Activated naive CD4-positive, alpha-beta T cell treated with anti-CD3 and anti-CD28 coated beads for 36 hours (primary cell): ENCODE measurements at regions of chr20 and their contacts with region 1.

Region 1: GRCh38 chr20:44521484-44522481 is at the start of gene SERINC3:
- DNase-seq: peak; percentile 99
- H3K4me3 Mint-ChIP-seq: peak within 1 kb of the TSS; percentile 82
- H3K27ac Mint-ChIP-seq: peak within 1 kb of the TSS; percentile 94
- H3K4me1 Mint-ChIP-seq: peaks cover 47% of the 10 kb centered on the region
- H3K27me3 Mint-ChIP-seq: no peaks in the 10 kb centered on the region
- total RNA-seq, gene SERINC3: 48.7 to 50.2 TPM

Region 2: GRCh38 chr20:44210422-44211176 is 311.2 kb before region 1 on chr20 and contains the start of gene OSER1:
- CTCF ChIA-PET with region 1: no interaction called
- intact Hi-C with region 1: loop called (anchors 1 kb)
- DNase-seq: peak; percentile 99
- H3K4me3 Mint-ChIP-seq: peak within 1 kb of the TSS; percentile 94
- H3K27ac Mint-ChIP-seq: peak within 1 kb of the TSS; percentile 92
- H3K4me1 Mint-ChIP-seq: peaks cover 61% of the 10 kb centered on the region
- H3K27me3 Mint-ChIP-seq: no peaks in the 10 kb centered on the region
- total RNA-seq, gene OSER1: 27.7 to 28.4 TPM

Region 3: DNA sequence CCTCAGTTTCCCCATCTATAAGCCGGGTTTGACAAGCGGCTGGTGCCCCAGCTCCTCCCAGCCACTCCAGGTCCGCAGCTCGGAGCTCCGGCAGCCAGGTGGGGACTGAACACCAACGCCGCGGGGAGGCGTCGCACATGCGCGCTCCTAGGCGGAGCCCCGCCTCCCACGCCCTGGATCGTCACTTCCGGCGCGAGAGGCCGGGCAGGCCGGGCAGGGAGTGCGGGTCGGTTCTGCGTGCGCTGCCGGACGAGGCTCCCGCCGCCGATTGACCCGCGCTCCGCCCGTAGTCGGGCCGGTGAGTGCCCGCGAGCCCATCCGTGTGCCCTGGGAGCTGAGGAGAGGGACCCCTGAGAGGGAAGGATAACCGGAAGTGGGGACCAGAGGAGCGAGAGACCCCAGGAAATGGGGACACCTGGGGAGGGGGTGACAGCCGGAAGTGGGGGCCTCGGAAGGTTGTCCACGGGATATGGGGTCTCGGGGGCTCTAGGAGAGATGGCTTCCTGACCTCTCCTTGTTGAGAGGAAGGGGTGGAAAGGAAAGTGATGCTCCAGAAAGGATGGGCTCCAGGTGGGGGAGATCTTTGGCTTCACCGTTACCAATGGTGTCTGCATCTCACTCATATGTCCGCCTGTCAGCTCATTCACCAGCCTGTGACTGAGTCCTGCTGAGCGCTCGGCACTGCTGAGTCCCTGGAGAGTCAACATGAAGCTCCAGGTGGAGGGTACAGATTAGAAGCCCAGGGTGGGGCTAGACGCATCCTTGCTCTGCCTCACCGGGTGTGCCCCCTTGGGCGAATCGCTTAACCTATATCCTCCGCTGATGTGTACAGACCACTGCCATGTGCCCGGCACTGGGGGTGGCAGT is 45.9 kb before region 1 on chr20 and contains the start of gene TTPAL:
- CTCF ChIA-PET with region 1: interaction called, 3 read pairs
- intact Hi-C with region 1: loop called (anchors 1 kb)
- DNase-seq: peak; percentile 92
- H3K4me3 Mint-ChIP-seq: peak within 1 kb of the TSS; percentile 95
- H3K27ac Mint-ChIP-seq: peak within 1 kb of the TSS; percentile 96
- H3K4me1 Mint-ChIP-seq: peaks cover 20% of the 10 kb centered on the region
- H3K27me3 Mint-ChIP-seq: no peaks in the 10 kb centered on the region
- total RNA-seq, gene TTPAL: 10.8 to 11.5 TPM

Region 4: DNA sequence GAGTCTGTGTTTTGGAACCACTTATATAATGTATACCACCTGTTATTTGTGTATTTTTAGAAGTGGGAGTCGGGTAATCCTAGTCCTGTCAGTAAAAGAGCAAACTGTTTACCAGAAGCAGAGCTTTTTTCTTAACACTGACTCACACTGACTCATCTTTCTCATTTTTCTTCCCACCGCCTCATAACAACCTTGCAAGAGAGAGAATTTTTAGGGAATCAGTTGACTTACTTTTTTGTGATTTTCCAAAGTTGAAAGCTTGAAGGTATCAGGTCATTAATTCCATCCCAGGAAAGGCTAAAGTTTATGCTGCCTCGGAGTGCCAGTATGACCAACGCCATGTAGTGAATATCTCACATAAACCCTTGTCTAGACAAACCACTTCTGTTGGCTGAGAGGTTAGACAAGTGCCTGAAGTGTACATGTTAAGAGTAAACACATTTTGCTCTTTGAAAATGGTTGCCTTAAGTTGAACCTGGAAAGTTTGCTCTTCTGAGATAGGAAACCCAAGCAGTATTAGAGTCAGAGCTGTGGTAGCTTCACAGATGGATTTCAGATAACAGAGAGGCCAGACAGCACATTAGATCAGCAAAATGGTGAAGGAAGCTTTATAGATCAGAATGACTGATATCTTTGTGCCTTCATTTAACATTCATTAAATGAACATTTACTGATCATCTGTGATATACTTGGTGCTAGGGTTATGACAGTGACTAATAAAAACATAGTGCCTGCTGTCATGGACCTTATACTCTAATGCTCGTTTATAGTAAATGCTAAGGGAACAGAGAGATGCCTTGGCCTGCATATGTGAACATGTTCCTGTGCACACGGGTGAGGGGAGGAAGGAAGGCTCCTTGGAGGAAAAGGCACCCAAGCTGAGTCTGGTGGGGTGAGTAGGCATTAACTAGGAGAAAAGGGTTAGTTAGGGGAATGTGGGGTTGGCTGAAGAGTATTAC is 31.4 kb after region 1 on chr20:
- CTCF ChIA-PET with region 1: interaction called, 3 read pairs
- intact Hi-C with region 1: loop called (anchors 2 kb)
- DNase-seq: no peak
- H3K4me3 Mint-ChIP-seq: no peak overlapping the region
- H3K27ac Mint-ChIP-seq: peak overlapping the region; percentile 57
- H3K4me1 Mint-ChIP-seq: peaks cover 19% of the 10 kb centered on the region
- H3K27me3 Mint-ChIP-seq: no peaks in the 10 kb centered on the region

Region 5: GRCh38 chr20:44966030-44966961 is 444.5 kb after region 1 on chr20 and contains the start of gene STK4:
- CTCF ChIA-PET with region 1: no interaction called
- intact Hi-C with region 1: loop called (anchors 5 kb)
- DNase-seq: peak; percentile 96
- H3K4me3 Mint-ChIP-seq: peak within 1 kb of the TSS; percentile 88
- H3K27ac Mint-ChIP-seq: peak within 1 kb of the TSS; percentile 98
- H3K4me1 Mint-ChIP-seq: peaks cover 56% of the 10 kb centered on the region
- H3K27me3 Mint-ChIP-seq: no peaks in the 10 kb centered on the region
- total RNA-seq, gene STK4: 110 to 116 TPM